Activated T-helper 2 cell treated with anti-CD3 and anti-CD28 coated beads, Interferon-gamma antibody, Interleukin-2, Interleukin-4, amounts not matched to agents 10 μg/mL and 5 μg/mL and 100 μg/mL, durations not matched to agents 14 hours and 24 hours and 36 hours (primary cell): ENCODE measurements at regions of chr9 and their contacts with region 1.

Region 1: DNA sequence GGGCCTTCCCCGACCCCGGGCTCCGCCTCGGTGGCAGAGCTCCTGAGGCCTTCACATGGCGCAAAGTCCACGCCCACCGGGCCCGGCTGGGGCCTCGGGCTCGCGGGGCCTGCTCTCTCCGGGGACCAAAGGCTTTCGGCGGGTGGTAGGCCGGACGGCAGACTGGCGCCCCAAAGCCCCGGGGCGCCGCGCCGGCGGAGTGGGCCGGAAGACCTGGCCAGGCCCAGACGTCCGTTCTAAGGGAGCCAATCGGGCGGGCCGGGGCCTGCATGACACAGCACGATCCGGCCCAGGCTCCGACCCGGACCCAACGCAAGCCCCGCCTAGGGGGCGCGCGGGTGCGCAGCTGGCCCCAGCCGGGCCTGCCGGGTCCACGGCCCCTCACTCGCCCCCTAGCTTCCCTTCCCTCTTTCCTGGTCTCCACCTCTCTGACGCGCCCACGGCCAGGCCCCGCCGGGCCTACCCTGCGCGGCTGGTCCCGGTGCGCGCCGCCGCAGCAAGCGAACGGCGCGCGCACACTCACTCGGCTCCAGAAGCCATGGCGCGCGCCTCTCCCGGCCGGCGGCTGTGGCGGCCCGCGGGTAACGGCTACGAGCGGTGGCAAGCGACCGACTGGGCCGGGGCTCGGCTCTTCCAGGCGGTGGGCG is 488 bp downstream of the VCP start:
- DNase-seq: peak; percentile 72
- H3K4me3 Mint-ChIP-seq: peak overlapping the region; percentile 91
- H3K27ac Mint-ChIP-seq: peak overlapping the region; percentile 88
- H3K4me1 Mint-ChIP-seq: peaks cover 43% of the 10 kb centered on the region
- H3K27me3 Mint-ChIP-seq: no peaks in the 10 kb centered on the region

Region 2: GRCh38 chr9:35035851-35036701 is 35.9 kb before region 1 on chr9:
- intact Hi-C with region 1: no loop called
- DNase-seq: peak; percentile 56
- H3K4me3 Mint-ChIP-seq: peak overlapping the region; percentile 63
- H3K27ac Mint-ChIP-seq: peak overlapping the region; percentile 70
- H3K4me1 Mint-ChIP-seq: peaks cover 5% of the 10 kb centered on the region
- H3K27me3 Mint-ChIP-seq: no peaks in the 10 kb centered on the region

Region 3: DNA sequence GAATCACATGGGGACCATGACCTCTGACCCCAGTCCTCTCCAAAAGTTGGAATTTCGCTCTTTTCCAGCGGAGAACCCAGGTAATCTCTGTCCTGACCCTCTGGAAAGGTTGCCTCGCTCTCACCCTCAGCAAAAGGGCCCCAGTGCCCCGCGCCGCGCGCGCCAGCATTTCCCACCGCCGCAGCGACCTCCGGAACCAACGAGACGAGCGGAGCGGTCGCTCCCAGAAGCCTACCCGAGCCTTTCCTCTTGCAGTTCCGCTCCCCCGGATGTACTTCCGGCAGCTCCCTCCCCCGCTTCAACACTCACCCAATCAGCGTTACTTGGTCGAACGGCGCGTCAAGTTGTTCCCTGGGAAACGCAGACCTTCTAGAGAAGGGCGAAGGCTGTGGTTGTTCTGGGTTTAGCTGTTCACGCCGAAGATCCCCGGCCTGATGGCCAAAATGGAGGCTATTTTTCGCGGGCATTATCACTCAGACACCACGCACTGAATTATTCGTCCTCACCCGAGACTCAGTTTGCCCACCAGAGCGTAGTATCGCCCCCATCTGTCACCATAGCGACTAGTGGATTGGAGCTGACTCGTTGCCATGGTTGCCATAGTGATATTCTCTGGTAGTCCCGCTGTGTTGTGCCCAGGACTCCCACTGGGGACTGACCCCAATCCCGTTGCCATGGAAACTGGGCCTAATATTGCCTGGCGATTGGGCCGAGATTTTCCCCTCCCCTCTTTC is 31.2 kb after region 1 on chr9 and contains the start of gene STOML2:
- intact Hi-C with region 1: loop called (anchors 1 kb)
- DNase-seq: peak; percentile 91
- H3K4me3 Mint-ChIP-seq: peak within 1 kb of the TSS; percentile 97
- H3K27ac Mint-ChIP-seq: peak within 1 kb of the TSS; percentile 96
- H3K4me1 Mint-ChIP-seq: peaks cover 18% of the 10 kb centered on the region
- H3K27me3 Mint-ChIP-seq: no peaks in the 10 kb centered on the region
- total RNA-seq, gene STOML2: 211 and 214 TPM in 2 replicates

Region 4: DNA sequence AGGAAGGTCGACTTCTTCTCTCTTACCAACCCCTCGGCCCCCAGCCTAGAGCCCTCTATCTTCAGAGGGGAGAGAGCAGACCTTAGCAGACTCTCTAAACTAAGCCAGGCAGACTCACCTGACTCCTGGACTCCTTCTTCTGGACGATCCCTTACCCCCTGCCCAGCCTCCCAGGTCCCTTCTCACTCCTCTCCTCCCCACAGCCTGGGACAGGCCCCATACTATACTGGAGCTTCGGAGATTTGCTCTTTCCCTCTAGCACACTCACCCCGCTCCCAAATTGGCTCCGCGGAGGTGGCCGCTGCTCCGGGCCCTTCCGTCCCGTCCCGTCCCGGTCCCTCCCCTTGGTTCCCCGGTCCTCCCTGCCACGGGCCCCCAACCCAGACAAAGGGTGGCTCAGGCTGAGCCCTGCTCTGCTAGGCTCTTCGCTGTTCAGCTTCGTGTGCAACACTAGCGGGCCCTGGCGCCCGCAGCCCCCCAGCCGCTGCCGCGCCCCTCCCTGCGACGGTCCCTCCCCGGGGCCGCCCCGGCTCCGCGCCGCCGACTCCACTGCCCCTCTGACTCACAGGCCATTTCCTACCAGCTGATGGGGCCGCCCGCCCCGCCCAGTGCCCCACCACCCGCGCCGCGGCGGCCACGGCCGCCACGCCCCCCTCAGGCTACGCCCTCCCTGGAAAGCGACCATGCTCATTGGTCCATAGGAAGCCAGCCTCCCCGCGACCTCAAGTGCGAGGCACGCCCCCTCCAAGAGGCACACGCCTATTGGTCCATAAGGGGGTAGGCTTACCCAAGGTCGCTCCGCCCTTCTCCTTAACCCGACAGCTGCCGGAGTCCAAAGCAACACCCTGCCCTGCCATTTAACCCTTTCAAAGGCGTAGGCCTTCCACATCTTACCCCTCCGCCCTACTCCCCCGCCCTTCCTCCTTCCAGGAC is 39.3 kb after region 1 on chr9:
- intact Hi-C with region 1: loop called (anchors 1 kb)
- DNase-seq: peak; percentile 93
- H3K4me3 Mint-ChIP-seq: peak overlapping the region; percentile 71
- H3K27ac Mint-ChIP-seq: peak overlapping the region; percentile 81
- H3K4me1 Mint-ChIP-seq: peaks cover 35% of the 10 kb centered on the region
- H3K27me3 Mint-ChIP-seq: no peaks in the 10 kb centered on the region